ENCODE measurements at regions of chr7 and their contacts with region 1.

Region 1: GRCh38 chr7:106071356-106071998 is 40.6 kb downstream of the SYPL1 start:
- DNase-seq: peak in 7 of 10 donors; percentile 19 to 76 (median 52)
- ATAC-seq: peak; percentile 97
- H3K4me3 Mint-ChIP-seq: peak overlapping the region; percentile 69 to 84 (median 78)
- H3K27ac Mint-ChIP-seq: peak overlapping the region; percentile 94 to 99 (median 96)
- H3K4me1 Mint-ChIP-seq: peaks cover 34 to 80% (median 64%) of the 10 kb centered on the region in 4 donors
- H3K27me3 Mint-ChIP-seq: no peaks in the 10 kb centered on the region

Region 2: DNA sequence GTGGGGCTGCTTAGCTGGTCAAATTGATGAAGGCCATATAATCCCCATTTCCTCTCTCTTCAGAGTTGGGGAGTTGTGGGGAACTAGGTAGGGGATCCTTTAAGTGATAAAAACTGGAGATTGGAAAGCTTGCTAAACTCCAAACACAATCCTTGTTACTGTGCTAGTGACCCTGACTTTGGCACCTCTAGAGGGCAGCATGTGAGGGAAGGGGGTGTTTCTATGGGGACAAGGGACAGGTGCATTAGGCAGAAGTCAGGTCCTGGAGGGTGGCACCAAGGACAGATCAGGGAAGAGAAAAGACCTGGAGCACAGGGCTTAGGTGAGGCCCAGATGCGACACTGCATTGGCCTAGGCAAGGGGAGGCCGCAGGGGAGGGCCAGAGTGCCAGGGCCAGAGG is 41.5 kb before region 1 on chr7:
- POLR2A ChIA-PET with region 1: no interaction called
- DNase-seq: no peak
- ATAC-seq: no peak
- H3K4me3 Mint-ChIP-seq: no peak overlapping the region
- H3K27ac Mint-ChIP-seq: peak overlapping the region in 2 of 10 donors; percentile 47 to 66
- H3K4me1 Mint-ChIP-seq: peaks cover 26 to 54% (median 48%) of the 10 kb centered on the region in 4 donors
- H3K27me3 Mint-ChIP-seq: peaks cover 0 to 1% (median 0%) of the 10 kb centered on the region in 5 donors

Region 3: DNA sequence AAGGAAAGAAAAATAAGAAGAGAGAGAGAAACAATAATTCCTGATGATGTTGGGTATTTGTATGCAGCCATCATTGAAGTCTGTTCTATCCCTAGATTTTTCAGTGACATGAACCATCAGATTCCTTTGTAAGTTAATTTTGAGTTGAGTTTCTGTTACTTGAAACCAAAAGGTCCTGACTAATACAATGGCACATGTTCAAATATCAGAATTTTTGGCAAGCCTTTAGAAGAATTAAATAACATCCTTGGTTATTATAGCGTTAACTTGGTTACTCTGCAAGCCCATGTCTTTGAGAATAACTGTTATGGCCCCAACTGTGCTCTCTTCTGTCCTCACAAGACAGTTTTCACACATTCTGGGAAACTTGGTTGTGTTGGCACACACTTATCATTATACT is 25.9 kb before region 1 on chr7:
- POLR2A ChIA-PET with region 1: no interaction called
- DNase-seq: no peak
- ATAC-seq: no peak
- H3K4me3 Mint-ChIP-seq: no peak overlapping the region
- H3K27ac Mint-ChIP-seq: no peak overlapping the region
- H3K4me1 Mint-ChIP-seq: peaks cover 15 to 32% (median 25%) of the 10 kb centered on the region in 4 donors
- H3K27me3 Mint-ChIP-seq: peaks cover 0 to 5% (median 0%) of the 10 kb centered on the region in 5 donors

Region 4: DNA sequence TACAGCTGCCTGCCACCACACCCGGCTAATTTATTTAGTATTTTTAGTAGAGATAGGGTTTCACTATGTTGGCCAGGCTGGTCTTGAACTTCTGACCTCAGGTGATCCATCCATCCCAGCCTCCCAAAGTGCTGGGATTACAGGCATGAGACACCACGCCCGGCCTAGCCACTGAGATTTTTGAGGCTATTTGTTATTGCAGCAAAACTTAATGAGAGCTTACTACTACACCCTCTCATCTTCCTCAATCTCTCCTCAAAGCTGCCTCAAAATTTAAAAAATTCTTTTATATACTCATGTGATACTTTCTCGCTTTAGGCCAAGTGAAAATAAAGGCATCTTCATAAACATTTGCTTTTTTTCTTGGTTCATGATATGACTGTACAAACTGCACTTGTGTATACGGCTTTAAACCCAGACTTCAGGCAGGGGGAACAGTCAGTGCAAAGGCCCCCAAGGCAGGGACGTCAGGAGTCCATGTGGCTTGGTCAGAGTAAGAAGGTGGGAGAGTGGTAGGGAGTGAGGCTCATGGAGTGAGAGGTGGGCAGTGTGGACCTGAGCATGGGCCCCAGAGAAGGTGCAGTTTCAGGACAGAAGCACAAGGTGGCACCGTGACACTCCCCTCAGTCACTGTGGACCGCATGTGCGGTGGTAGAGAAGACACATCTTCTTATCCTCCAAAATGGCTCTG is 14.8 kb before region 1 on chr7:
- POLR2A ChIA-PET with region 1: interaction called, 16 read pairs
- DNase-seq: peak; percentile 47 to 86 (median 68)
- ATAC-seq: peak; percentile 95 to 96
- H3K4me3 Mint-ChIP-seq: peak overlapping the region in 7 of 10 donors; percentile 38 to 58 (median 49)
- H3K27ac Mint-ChIP-seq: peak overlapping the region in 1 of 10 donors; percentile 53
- H3K4me1 Mint-ChIP-seq: peaks cover 7 to 43% (median 27%) of the 10 kb centered on the region in 4 donors
- H3K27me3 Mint-ChIP-seq: no peaks in the 10 kb centered on the region

Region 5: DNA sequence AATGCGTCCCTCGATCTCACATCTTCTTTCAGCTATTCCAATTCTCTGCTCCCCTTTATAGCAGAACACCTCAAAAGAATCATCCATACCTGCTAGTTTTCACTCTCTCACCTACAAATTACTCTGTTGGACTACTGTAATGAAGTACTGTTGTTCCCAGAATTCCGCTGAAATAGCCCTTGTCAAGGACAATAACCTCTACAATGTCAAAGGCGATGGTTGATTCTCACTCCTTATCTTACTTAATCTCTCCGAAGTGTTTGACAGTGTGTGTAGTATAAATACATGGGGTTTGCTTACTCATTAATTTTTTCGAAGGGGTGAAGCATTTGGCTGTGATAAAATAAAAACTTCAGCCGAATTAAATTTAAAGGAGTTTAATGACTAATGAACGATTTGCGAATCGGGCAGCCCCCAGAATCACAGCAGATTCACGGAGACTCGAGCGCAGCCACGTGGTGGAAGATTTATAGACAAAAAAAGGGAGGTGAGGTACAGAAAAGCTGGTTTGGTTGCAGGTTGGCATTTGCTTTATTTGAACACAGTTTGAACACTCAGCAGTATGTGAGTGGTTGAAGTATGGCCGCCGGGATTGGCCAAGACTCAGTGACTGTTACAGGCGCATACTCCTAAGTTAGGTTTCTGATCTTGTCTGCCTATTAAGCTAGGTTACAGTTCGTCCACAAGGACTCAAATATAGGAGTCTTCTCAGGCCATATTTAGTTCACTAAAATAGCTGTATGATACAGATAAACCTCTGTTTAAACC is 10.8 kb after region 1 on chr7:
- POLR2A ChIA-PET with region 1: interaction called, 12 read pairs
- DNase-seq: no peak
- ATAC-seq: no peak
- H3K4me3 Mint-ChIP-seq: no peak overlapping the region
- H3K27ac Mint-ChIP-seq: no peak overlapping the region
- H3K4me1 Mint-ChIP-seq: peaks cover 12 to 54% (median 29%) of the 10 kb centered on the region in 4 donors
- H3K27me3 Mint-ChIP-seq: no peaks in the 10 kb centered on the region

Region 6: DNA sequence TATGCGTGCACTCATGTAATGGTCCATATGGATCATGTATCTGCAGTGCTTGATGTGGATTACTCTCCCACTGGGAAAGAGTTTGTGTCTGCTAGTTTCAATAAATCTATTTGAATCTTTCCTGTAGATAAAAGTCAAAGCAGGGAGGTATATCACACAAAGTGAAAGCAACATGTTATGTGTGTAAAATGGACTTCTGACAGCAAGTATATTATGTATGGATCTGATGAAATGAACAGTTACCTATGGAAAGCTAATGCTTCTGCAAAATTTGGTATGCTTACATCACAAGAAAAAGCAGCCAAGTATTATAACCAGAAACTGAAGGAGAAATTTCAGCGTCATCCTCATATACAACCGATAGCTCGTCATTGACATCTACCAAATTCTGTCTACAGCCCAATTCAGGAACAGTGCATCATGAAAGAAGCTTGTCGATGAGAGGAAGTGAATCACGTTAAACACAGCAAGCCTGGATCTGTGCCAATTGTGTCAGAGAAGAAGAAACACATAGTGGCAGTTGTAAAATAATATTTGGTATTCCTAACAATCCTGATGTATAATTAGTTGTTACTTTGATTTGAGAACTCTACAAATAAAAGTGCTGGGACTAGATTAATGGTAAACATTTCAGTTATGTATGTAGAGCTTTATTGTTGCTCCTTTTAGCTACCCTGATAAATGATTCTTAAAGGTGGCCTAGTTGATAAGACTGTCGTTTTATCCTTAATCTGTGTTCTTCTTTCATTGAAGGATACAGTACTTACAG is 54.9 kb after region 1 on chr7:
- POLR2A ChIA-PET with region 1: interaction called, 14 read pairs
- DNase-seq: peak in 9 of 10 donors; percentile 10 to 78 (median 48)
- ATAC-seq: peak; percentile 82 to 85
- H3K4me3 Mint-ChIP-seq: peak overlapping the region in 9 of 10 donors; percentile 2 to 77 (median 62)
- H3K27ac Mint-ChIP-seq: peak overlapping the region in 4 of 10 donors; percentile 7 to 36 (median 27)
- H3K4me1 Mint-ChIP-seq: peaks cover 8 to 22% (median 15%) of the 10 kb centered on the region in 4 donors
- H3K27me3 Mint-ChIP-seq: peaks cover 0 to 5% (median 0%) of the 10 kb centered on the region in 5 donors